ENCODE measurements at regions of chr1 and their contacts with region 1.

Region 1: DNA sequence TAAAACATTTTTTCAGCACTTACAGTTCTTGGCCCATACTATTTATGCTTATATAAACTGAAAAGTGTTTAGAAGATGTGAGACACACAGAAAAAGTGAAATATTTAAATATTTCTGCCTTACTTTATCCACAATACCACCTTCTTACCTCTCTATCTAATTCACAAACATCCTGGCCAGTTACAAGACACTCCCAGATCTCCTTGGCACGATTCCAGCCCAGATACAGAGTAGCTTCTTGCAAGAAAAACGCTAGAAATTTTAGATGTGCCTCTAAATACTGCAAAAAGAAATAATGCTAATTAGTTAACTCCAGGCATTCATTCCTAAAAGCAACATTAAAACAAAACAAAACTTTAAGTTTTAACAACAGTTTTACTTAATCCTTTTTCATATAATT is 68.4 kb downstream of the USP24 start:
- DNase-seq: peak; percentile 73
- H3K4me3 ChIP-seq: no peak overlapping the region
- H3K27ac ChIP-seq: no peak overlapping the region
- H3K4me1 ChIP-seq: peaks cover 0 to 12% (median 3%) of the 10 kb centered on the region in 4 donors
- H3K27me3 ChIP-seq: no peaks in the 10 kb centered on the region
- CTCF ChIP-seq: no peak
- EP300 ChIP-seq: no peak
- POLR2A ChIP-seq: no peak

Region 2: DNA sequence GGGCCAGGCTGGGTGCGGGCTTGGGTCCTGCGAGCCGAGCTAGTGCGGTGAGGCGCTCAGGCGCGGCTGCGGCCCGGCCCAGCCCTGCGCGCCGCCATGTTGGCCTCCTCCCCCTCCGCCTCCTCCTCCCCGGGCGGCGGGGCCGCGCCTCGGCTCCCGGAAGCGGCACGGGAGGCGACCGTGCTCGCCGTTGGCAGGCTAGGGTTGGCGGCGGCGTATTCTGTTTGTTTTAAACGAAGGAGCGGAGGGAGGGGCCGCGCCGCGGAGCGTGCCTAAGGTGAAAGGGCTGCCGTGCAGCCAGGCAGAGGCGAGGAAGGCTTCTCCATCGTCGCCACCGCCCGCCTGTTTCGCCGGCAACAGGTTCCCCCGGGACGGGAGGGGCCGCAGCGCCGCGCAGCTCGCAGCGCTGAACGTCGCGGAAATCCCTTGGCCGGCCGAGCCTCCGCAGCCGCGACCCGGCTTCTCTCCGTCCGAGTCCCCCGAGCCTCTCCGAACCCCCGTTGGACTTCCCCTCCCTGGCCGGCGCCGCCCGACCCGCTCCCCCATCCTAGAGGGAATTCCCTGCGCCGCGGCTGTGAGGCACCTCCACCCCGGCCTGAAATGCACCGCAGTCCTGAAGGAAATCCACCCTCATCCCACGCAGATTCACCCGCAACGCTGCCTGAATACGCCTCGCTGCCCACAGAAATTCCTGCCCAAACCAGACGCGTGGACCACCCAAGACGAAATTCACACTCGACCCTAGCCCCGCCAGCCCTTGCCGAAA is 68.7 kb after region 1 on chr1 and contains the start of gene USP24:
- intact Hi-C with region 1: loop called (anchors 5 kb)
- DNase-seq: peak; percentile 83
- H3K4me3 ChIP-seq: peak within 1 kb of the TSS; percentile 61 to 93 (median 72)
- H3K27ac ChIP-seq: peak within 1 kb of the TSS; percentile 94 to 97 (median 96)
- H3K4me1 ChIP-seq: peaks cover 0 to 46% (median 32%) of the 10 kb centered on the region in 4 donors
- H3K27me3 ChIP-seq: no peaks in the 10 kb centered on the region
- CTCF ChIP-seq: no peak
- EP300 ChIP-seq: no peak
- POLR2A ChIP-seq: peak; percentile 70 to 83
- total RNA-seq, gene USP24: 46.4 to 66.2 (median 53.6) TPM

Region 3: DNA sequence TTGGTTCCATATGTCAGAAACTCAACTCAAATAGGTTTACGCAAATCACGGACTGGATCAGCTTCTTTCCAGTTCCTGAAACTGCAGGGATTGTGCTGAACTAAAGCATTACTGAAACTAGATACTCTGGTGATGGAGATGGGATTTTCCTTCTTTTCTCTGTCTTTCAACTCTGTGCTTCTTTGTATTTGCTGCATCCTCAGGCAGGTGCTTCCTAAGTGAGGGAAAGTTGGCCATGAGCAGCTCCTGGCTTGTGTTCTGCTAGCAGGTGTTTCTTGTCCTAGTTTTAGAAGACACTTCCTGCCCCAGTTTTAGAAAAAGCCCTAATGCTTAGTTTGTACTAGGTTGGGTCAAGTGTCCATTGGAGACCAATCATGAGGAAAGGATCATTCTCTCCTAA is 155.1 kb after region 1 on chr1:
- intact Hi-C with region 1: no loop called
- DNase-seq: no peak
- H3K4me3 ChIP-seq: no peak overlapping the region
- H3K27ac ChIP-seq: no peak overlapping the region
- H3K4me1 ChIP-seq: no peaks in the 10 kb centered on the region
- H3K27me3 ChIP-seq: peaks cover 0 to 3% (median 0%) of the 10 kb centered on the region in 3 donors
- CTCF ChIP-seq: no peak
- EP300 ChIP-seq: no peak
- POLR2A ChIP-seq: no peak

Region 4: DNA sequence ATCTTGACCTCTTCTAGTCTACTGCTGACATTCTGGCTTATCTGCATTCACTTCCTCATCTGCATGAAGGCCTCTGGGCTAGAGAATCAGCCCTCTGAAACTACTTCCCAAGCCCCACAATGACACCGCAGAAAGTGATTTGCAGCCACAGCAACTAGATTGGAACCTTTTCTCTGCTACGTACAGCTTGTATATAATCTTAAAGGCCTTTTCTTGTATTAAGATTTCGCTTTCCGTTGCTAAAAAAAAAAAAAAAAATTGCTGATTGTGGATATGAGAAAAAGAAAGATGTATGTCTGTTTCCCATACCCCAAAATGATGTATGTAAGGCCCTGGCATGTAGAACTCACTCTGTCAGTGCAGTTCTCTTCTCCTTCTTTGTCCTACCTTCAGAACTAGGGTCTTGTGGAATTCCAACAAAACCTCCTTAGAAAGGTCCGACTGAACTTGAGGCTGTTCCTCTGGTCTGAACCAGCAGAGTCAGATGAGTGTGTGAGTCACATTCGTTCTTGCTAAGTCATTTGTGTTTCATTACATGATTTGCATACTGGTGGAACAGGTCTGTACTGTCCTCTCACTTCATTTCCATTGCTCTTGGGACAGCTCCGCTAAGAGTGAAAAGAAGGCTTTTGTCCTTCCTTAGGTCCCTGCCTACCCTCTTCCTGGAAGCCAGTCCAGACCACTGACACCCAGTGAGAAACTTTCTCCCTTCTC is 1369.9 kb after region 1 on chr1:
- intact Hi-C with region 1: no loop called
- DNase-seq: no peak
- H3K4me3 ChIP-seq: no peak overlapping the region
- H3K27ac ChIP-seq: peak overlapping the region in 1 of 4 donors; percentile 17
- H3K4me1 ChIP-seq: no peaks in the 10 kb centered on the region
- H3K27me3 ChIP-seq: no peaks in the 10 kb centered on the region
- CTCF ChIP-seq: no peak
- EP300 ChIP-seq: no peak
- POLR2A ChIP-seq: no peak

Measured in sigmoid colon (tissue), 7 donors.